ENCODE measurements at regions of chr11 and their contacts with region 1.

Region 1: DNA sequence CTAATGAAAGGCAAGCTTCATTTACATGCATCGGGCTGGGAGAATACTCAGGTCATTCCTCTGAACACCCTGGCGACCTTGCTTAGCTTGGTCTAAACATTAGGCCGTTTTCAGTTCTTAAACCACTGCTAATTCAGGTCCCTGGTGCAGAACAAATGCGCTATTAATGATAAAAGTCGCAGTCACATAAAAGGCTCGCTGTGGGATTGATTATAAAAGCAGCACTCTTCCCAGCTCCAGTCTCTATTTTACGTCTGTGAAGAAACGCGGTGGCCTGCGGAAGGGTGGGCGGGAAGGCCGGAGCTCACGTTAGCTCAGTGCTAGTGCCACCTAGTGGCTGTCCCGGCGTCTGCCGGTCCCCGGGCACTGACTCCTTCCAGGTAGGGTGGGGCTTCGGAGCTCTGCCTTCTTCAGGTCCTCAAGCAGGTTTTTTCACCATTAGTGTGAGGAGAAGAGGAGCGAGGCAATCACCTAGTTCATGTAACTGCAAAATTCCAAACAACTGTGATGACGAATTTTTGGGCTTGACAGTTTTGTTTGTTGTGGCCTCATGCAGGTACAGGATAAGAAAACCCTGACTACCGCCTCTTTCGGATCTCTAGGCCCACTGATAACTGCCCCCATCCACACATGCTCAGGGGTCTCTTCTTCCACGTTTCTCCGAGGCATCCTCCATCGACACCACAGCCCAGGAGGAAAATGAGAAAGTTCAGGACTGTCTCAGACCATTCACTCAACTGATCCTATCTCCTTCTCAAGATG is 66.5 kb upstream of the CLMP start:
- DNase-seq: peak; percentile 93
- ATAC-seq: peak; percentile 98
- H3K4me3 Mint-ChIP-seq: peak overlapping the region; percentile 44
- H3K27ac Mint-ChIP-seq: no peak overlapping the region
- H3K4me1 Mint-ChIP-seq: peaks cover 7% of the 10 kb centered on the region; the same call in 1 of the 2 replicates
- H3K27me3 Mint-ChIP-seq: peaks cover 33% of the 10 kb centered on the region
- CTCF ChIP-seq: peak; percentile 87

Region 2: DNA sequence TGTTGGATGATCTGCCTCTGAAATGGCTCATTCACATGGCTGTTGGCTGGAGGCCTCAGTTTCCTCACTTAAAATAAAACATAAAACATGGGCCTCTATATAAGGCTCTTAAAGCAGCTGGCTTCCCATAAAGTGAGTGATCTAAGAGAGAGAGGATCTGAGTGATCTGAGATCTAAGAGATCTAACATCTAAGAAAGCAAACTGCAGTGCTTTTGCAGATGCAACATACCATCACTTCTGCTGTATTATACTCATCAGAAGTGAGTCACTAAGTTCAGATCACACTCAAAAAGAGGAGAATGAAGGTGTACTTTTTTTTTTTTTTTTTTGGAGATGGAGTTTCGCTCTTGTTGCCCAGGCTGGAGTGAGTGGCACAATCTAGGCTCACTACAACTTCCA is 181.5 kb before region 1 on chr11:
- CTCF ChIA-PET with region 1: interaction called, 14 read pairs
- POLR2A ChIA-PET with region 1: no interaction called
- DNase-seq: no peak
- ATAC-seq: no peak
- H3K4me3 Mint-ChIP-seq: no peak overlapping the region
- H3K27ac Mint-ChIP-seq: no peak overlapping the region
- H3K4me1 Mint-ChIP-seq: no peaks in the 10 kb centered on the region
- H3K27me3 Mint-ChIP-seq: no peaks in the 10 kb centered on the region
- CTCF ChIP-seq: no peak

Region 3: GRCh38 chr11:123122341-123122740 is 139.2 kb before region 1 on chr11:
- CTCF ChIA-PET with region 1: interaction called, 14 read pairs
- POLR2A ChIA-PET with region 1: no interaction called
- DNase-seq: no peak
- ATAC-seq: no peak
- H3K4me3 Mint-ChIP-seq: no peak overlapping the region
- H3K27ac Mint-ChIP-seq: peak overlapping the region; percentile 26; the same call in 1 of the 2 replicates
- H3K4me1 Mint-ChIP-seq: peaks cover 8% of the 10 kb centered on the region
- H3K27me3 Mint-ChIP-seq: no peaks in the 10 kb centered on the region
- CTCF ChIP-seq: no peak

Region 4: DNA sequence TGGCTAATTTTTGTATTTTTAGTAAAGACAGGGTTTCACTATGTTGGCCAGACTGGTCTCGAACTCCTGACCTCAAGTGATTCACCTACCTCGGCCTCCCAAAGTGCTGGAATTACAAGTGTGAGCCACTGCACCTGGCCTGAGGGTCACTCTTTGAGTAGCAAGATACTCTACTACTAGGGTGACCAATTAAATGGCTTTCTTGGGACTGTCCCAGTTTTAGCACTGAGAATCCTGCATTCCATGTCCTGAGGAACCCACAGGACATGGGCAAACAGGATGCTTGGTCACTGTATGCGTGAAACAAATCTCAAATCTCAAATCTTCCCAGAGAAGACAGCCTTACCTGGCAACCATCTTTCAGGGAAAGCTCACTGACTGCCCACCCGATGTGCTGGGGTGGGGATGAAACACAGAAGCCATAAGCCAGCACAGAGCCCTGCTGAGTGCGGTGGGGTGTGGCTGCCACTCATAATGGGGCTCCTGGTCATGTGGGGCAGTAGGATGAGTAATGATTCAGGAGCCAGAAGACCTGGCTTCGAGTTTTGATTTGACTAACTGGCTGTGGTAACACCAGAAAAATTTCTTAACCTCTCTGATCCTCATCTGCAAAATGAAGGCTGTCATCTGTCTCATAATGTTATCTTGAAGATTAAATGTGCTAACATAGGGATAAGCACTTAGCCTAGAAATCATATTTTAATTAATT is 78.0 kb before region 1 on chr11:
- CTCF ChIA-PET with region 1: interaction called, 15 read pairs
- POLR2A ChIA-PET with region 1: interaction called, 3 read pairs
- DNase-seq: no peak
- ATAC-seq: no peak
- H3K4me3 Mint-ChIP-seq: no peak overlapping the region
- H3K27ac Mint-ChIP-seq: no peak overlapping the region
- H3K4me1 Mint-ChIP-seq: peaks cover 69% of the 10 kb centered on the region
- H3K27me3 Mint-ChIP-seq: no peaks in the 10 kb centered on the region
- CTCF ChIP-seq: no peak

Region 5: GRCh38 chr11:123246749-123247495 is 14.6 kb before region 1 on chr11:
- CTCF ChIA-PET with region 1: interaction called, 90 read pairs
- POLR2A ChIA-PET with region 1: interaction called, 5 read pairs
- DNase-seq: peak; percentile 90
- ATAC-seq: peak; percentile 87
- H3K4me3 Mint-ChIP-seq: no peak overlapping the region
- H3K27ac Mint-ChIP-seq: no peak overlapping the region
- H3K4me1 Mint-ChIP-seq: peaks cover 22% of the 10 kb centered on the region
- H3K27me3 Mint-ChIP-seq: peaks cover 3% of the 10 kb centered on the region; the same call in 1 of the 2 replicates
- CTCF ChIP-seq: peak; percentile 93

Region 6: GRCh38 chr11:123407130-123407995 is 145.8 kb after region 1 on chr11:
- CTCF ChIA-PET with region 1: interaction called, 21 read pairs
- POLR2A ChIA-PET with region 1: no interaction called
- DNase-seq: peak; percentile 78
- ATAC-seq: peak; percentile 89
- H3K4me3 Mint-ChIP-seq: no peak overlapping the region
- H3K27ac Mint-ChIP-seq: peak overlapping the region; percentile 49; the same call in 1 of the 2 replicates
- H3K4me1 Mint-ChIP-seq: peaks cover 30% of the 10 kb centered on the region
- H3K27me3 Mint-ChIP-seq: peaks cover 36% of the 10 kb centered on the region
- CTCF ChIP-seq: peak; percentile 45; the same call in 1 of the 2 replicates